Activated CD4-positive, alpha-beta T cell treated with anti-CD3 and anti-CD28 coated beads, Interleukin-2, amount 10 ng/mL, durations not matched to agents 24 days and 14 days (primary cell): ENCODE measurements at regions of chr10 and their contacts with region 1.

Region 1: DNA sequence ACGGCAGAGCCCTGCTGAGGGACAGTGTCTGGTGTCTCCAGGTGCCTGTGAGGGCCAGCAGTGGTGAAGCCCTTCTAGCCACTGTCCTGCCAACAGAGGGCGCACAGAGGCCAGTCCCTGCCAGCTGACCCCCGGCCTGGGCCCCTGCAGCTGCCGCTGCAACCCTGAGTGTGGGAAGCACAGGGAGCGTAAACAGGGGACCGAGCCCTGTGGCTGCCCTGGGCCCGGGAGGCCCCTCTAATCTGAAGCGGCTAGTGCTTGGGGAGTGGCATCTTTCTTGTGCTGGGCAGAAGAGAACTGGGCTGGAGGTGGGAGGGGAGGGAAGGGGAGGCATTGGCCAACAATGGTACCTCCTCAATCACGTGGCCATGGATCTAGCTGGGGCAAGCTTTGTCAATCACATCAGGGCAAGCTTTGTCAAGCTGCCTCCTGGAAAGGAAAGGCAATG is 34.6 kb downstream of the TRIM8 start:
- DNase-seq: peak; percentile 67
- H3K4me3 Mint-ChIP-seq: no peak overlapping the region
- H3K27ac Mint-ChIP-seq: no peak overlapping the region
- H3K4me1 Mint-ChIP-seq: peaks cover 30% of the 10 kb centered on the region
- H3K27me3 Mint-ChIP-seq: no peaks in the 10 kb centered on the region

Region 2: DNA sequence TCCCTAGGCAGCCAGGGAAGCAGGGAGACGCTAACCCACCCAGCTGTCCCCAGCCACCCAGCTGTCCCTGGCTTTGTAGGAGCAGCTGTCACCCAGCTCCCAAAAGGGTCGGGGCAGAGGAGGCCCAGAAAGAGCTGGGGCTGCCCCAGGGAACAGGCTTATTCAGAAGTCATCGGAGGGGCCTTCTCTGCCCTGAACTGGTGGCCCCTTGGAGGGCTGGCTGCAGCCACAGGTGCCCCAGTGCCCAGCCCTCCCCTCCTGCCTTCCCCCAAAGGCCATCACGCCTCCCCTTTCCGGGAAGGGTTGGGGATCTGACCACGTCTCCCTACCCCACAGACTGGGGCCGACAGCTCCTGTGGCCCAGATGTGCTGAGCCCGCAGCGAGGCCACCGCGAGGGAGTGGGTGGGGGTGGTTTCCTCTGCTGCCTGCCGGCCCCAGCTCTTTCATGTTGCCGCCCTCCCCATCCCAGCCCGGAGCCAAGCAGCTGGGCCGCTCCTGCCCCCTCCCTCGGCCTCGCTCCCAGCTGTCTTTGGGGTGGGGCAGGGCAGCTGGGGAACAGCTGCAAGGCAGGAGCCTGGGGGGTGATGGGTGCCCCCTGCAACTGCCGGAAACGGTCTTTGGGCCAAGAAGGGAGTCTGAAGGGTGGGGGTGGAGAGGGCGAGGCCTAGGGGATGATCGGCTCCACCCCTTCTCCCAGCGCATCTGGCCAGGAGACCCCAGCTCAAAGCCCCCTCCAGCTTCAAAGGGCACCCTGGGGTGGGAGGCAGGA is 17.8 kb before region 1 on chr10:
- intact Hi-C with region 1: loop called (anchors 1 kb)
- DNase-seq: peak; percentile 91
- H3K4me3 Mint-ChIP-seq: peak overlapping the region; percentile 72
- H3K27ac Mint-ChIP-seq: peak overlapping the region; percentile 88
- H3K4me1 Mint-ChIP-seq: peaks cover 37% of the 10 kb centered on the region
- H3K27me3 Mint-ChIP-seq: no peaks in the 10 kb centered on the region